Common myeloid progenitor, CD34-positive (primary cell): ENCODE measurements at regions of chr6 and their contacts with region 1.

Region 1: DNA sequence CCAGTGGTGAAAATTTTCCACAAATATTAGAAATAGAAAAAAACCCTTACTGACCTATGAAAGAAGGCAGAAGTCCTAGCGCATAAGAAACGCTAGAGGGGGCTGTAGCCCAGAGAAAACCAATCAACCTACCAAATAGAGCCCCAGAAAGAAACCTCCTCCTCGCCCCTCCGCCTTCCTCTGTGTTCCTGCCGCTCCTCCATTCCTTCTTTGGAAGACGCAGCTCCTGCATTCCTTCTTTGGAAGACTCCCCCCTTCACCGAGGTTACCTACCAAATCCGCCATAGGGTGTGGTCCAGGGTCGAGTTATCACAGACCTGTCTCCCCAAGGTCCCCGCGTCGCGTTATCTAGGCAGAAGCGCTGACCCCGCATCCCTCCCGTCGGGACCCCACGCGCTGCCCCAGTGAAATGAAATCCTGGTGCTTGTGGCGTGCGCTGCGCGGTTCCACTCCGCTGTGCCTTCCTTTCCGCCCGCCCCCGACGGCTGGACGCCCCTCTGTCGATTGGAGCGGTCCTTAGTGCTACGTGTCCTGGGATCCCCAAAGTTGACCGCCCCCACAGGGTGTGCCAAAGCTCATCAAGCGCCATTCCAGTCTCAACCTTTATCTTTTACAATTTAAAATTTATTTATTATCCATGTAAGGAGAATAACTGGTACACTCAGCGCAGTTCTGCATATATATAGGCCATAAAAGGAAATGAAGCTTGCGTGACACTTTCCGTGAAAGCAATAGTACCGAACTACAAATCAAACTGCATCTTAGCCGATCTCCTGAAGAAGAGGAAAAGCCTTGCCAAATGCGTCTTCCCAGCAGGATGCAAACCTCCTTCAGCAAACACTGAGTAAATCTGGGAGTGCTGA is 13.0 kb downstream of the RPP21 start:
- DNase-seq: peak; percentile 79 to 85 (median 79)
- H3K4me3 ChIP-seq: peak overlapping the region in 5 of 7 experiments; percentile 32 to 57 (median 46)
- H3K27ac ChIP-seq: no peak overlapping the region
- H3K4me1 ChIP-seq: peaks cover 0 to 8% (median 4%) of the 10 kb centered on the region in 4 experiments
- H3K27me3 ChIP-seq: peaks cover 29 to 83% (median 39%) of the 10 kb centered on the region in 5 experiments

Region 2: GRCh38 chr6:30227763-30228487 is 130.0 kb before region 1 on chr6:
- CTCF ChIA-PET with region 1: no interaction called
- POLR2A ChIA-PET with region 1: no interaction called
- DNase-seq: no peak
- H3K4me3 ChIP-seq: no peak overlapping the region
- H3K27ac ChIP-seq: no peak overlapping the region
- H3K4me1 ChIP-seq: no peaks in the 10 kb centered on the region
- H3K27me3 ChIP-seq: peaks cover 0 to 12% (median 2%) of the 10 kb centered on the region in 5 experiments

Region 3: GRCh38 chr6:30340589-30341054 is 17.3 kb before region 1 on chr6:
- CTCF ChIA-PET with region 1: no interaction called
- POLR2A ChIA-PET with region 1: no interaction called
- DNase-seq: no peak
- H3K4me3 ChIP-seq: no peak overlapping the region
- H3K27ac ChIP-seq: peak overlapping the region in 1 of 2 experiments; percentile 44
- H3K4me1 ChIP-seq: peaks cover 0 to 1% (median under 1%) of the 10 kb centered on the region in 4 experiments
- H3K27me3 ChIP-seq: no peaks in the 10 kb centered on the region

Region 4: DNA sequence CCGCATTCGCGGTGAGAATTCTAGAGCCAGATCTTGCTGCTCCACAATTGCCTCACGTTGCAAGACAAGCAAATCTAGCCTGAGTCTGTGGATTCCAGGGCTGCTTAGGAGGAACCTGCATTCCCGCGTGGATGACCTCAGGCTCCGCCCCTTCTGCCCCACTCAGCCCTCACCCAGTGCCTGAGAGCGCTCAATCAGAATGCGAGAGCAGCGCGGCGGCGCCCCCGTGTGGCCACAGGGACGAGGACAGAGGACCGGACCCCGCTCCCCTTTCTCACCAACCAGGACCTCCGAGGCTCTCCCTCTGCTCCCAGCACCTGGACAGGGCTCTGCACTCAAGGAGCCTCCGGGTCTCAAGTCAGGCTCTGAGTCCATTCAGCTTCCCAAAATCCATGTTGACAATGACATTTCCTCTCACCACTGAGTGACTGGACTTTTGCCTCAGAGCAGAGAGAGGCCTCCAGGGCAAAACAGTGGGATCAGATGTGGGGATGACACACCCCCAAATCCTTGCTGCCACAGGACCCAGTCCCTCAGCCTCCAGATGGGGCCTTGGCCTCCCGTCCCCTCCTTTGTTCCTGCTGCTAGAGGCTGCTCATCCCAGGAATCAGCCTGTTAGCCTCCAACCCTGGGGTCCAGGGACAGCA is 39.0 kb after region 1 on chr6:
- CTCF ChIA-PET with region 1: interaction called, 21 read pairs
- POLR2A ChIA-PET with region 1: no interaction called
- DNase-seq: peak; percentile 75 to 81 (median 76)
- H3K4me3 ChIP-seq: no peak overlapping the region
- H3K27ac ChIP-seq: no peak overlapping the region
- H3K4me1 ChIP-seq: peaks cover 0 to 13% (median 8%) of the 10 kb centered on the region in 4 experiments
- H3K27me3 ChIP-seq: peaks cover 6 to 63% (median 34%) of the 10 kb centered on the region in 5 experiments